Dendritic cell treated with granulocyte-macrophage colony-stimulating factor and Interleukin-4, amounts not matched to agents 40 ng/mL and 50 ng/mL, for 4 days (primary cell): ENCODE measurements at regions of chr6 and their contacts with region 1.

Region 1: GRCh38 chr6:87237804-87238203 is 82.4 kb downstream of the ZNF292 start:
- H3K4me3 Mint-ChIP-seq: no peak overlapping the region
- H3K27ac Mint-ChIP-seq: no peak overlapping the region
- H3K4me1 Mint-ChIP-seq: no peaks in the 10 kb centered on the region
- H3K27me3 Mint-ChIP-seq: no peaks in the 10 kb centered on the region

Region 2: GRCh38 chr6:87139236-87139635 is 98.6 kb before region 1 on chr6:
- intact Hi-C with region 1: loop called (anchors 1 kb)
- H3K4me3 Mint-ChIP-seq: no peak overlapping the region
- H3K27ac Mint-ChIP-seq: no peak overlapping the region
- H3K4me1 Mint-ChIP-seq: peaks cover 16% of the 10 kb centered on the region
- H3K27me3 Mint-ChIP-seq: peaks cover 20% of the 10 kb centered on the region

Region 3: GRCh38 chr6:87436435-87436834 is 198.6 kb after region 1 on chr6:
- intact Hi-C with region 1: no loop called
- H3K4me3 Mint-ChIP-seq: no peak overlapping the region
- H3K27ac Mint-ChIP-seq: no peak overlapping the region
- H3K4me1 Mint-ChIP-seq: no peaks in the 10 kb centered on the region
- H3K27me3 Mint-ChIP-seq: no peaks in the 10 kb centered on the region